ENCODE measurements at regions of chr14 and their contacts with region 1.

Region 1: GRCh38 chr14:63375771-63376170 is 57.0 kb upstream of the GPHB5 start:
- DNase-seq: peak in 1 of 2 experiments; percentile 80
- H3K4me3 ChIP-seq: no peak overlapping the region
- H3K27ac ChIP-seq: peak overlapping the region; percentile 54
- H3K4me1 ChIP-seq: peaks cover 16% of the 10 kb centered on the region
- H3K27me3 ChIP-seq: no peaks in the 10 kb centered on the region
- CTCF ChIP-seq: no peak

Region 2: DNA sequence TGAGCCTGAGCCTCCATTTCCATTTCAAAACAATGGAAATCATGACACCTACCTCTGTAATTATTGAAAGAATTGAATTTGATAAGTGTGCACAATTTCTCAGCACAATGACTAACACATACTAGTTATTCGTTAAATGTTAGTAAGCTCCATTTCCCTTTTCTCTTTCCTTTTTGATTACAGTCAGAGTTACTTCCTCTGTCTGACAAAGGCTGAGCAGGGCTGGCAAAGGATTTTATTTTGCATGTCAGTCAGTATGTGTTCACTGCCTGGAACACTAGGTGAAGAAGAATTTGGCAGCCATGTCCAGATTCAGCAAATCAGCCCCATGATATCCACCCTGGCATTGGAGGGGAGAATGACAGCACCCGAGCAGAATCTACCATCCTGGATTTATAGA is 183.7 kb before region 1 on chr14:
- CTCF ChIA-PET with region 1: no interaction called
- POLR2A ChIA-PET with region 1: interaction called, 13 read pairs
- intact Hi-C with region 1: no loop called
- DNase-seq: no peak
- H3K4me3 ChIP-seq: no peak overlapping the region
- H3K27ac ChIP-seq: no peak overlapping the region
- H3K4me1 ChIP-seq: no peaks in the 10 kb centered on the region
- H3K27me3 ChIP-seq: no peaks in the 10 kb centered on the region
- CTCF ChIP-seq: no peak

Region 3: DNA sequence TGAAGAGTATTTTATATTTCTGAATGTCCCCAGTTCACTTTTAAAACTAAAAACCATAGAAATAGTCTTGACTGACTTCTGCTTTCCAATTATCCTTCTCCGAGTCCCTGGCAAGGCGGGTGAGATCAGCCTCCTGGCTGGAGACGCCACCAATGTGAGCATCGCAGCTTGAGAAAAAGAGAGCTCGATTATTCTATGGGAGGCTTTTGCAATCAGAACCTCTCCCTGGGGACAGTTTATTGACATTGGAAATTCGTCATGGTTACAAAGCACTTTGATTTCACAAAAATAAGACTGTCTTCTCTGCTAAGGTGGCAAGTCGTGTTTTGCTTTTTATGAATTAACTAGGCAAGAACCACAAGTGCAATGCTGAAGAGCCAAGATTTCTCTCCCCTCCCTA is 33.4 kb before region 1 on chr14:
- CTCF ChIA-PET with region 1: no interaction called
- POLR2A ChIA-PET with region 1: no interaction called
- intact Hi-C with region 1: no loop called
- DNase-seq: no peak
- H3K4me3 ChIP-seq: no peak overlapping the region
- H3K27ac ChIP-seq: no peak overlapping the region
- H3K4me1 ChIP-seq: no peaks in the 10 kb centered on the region
- H3K27me3 ChIP-seq: no peaks in the 10 kb centered on the region
- CTCF ChIP-seq: no peak

Measured in PC-9 (cell line).